ENCODE measurements at regions of chr10 and their contacts with region 1.

Region 1: DNA sequence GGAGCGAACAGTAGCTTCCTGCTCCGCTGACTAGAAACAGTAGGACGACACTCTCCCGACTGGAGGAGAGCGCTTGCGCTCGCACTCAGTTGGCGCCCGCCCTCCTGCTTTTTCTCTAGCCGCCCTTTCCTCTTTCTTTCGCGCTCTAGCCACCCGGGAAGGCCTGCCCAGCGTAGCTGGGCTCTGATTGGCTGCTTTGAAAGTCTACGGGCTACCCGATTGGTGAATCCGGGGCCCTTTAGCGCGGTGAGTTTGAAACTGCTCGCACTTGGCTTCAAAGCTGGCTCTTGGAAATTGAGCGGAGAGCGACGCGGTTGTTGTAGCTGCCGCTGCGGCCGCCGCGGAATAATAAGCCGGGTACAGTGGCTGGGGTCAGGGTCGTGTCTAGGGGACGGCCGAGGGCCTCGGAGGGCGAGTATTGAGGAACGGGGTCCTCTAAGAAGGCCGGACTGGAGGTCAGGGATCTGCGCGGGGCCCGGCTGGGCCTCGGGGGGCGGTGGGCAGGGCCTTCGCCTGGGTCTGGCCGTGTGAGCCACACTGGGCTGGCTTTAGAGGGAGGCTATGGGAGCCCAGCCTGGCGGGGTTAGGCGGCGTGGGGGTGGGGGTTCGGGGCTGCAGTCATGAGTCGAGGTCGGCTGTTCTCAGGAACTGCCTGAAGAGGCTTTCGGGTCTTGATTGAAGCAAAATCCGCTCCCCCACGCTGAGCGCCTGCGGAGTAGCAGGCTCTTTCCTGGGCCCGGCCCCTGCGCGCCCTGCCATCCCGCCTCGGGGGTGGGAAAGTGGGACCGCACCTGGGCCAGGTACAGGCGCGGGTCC is at the start of gene CDK1:
- ATAC-seq: peak; percentile 98 to 100 (median 99)
- H3K4me3 ChIP-seq: peak within 1 kb of the TSS; percentile 43 to 81 (median 54)
- H3K27ac ChIP-seq: peak within 1 kb of the TSS in 1 of 2 donors; percentile 55
- H3K4me1 ChIP-seq: peaks cover 3 to 9% of the 10 kb centered on the region in 2 donors
- total RNA-seq, gene CDK1: 0.31 to 77.5 (median 4.2) TPM

Region 2: DNA sequence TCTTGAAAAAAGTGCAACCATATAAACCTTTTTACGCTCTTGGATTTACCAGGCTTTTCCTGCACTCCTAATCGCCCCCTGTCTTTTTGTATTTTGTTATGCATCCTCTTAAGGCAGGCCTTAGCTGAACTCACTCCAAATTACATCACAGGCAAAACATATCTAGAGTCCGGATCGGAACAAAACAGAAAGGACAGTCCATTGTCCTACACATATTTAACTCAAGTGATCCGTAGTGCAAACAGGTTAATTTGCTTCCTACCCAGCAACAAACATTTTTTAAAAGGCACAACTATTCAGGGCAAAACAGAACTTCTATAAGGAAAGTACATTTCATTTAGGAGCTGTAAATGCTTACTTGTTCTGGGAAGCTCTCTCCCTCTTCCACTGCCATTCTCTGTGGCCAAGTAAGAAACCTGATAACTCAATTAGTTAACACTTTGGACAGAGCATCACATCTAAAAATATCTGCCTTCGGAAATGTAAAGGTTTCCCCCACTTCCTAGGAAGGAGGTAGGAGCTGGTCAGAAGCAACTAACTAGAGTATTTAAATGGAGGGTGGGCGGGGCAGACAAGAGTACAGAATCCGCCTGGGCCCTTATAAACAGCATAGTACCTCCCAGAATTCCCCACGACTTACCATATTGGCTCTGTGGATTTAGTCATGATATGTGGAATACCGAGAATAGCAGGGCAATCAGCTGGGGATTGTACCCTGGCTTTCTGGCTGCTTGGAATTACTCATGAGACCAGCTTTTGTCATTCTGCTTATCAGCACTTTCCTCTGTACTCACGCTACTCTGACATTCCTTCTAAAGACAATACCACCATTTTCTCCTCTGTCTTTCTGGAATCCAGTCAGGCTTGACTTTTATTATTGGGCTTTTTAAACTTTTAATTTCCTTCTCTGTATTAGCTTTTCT is 478.2 kb before region 1 on chr10:
- in situ Hi-C with region 1: no loop called
- ATAC-seq: peak in 6 of 8 experiments; percentile 71 to 97 (median 94)
- H3K4me3 ChIP-seq: peak overlapping the region in 3 of 5 donors; percentile 5 to 26 (median 25)
- H3K27ac ChIP-seq: peak overlapping the region in 1 of 2 donors; percentile 26
- H3K4me1 ChIP-seq: peaks cover 6 to 26% of the 10 kb centered on the region in 2 donors

Region 3: DNA sequence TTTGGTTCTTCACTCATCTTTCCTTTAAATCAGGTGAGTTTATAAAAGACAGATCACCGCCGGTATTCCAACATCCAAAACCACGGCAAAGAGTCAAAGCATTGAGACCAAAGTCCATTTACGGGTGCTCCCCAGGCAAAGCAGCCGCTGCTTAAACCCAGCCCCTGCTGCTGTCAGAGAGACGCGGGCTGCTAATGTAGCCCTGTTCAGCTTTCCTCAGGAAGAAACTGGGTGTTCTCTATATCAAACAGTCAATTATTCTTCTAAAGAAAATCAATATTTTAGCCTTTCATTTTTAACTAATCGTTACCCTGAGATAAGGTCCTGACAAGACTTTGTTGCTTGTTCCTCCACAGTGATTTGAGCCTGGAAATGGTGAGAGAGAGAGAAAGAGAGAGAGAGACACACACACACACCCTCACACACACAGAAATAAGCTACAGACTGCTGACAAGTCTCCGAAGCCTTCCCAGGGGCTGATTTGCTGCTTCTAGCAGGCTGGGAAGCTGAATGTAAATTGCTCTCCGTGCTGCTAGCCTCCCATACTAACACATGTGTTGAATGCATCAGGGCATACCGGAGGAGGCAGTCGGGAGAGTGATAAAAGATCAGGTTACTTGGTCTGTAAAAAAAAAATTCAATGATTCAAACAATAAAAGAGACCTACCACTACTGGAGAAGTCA is 205.8 kb before region 1 on chr10:
- in situ Hi-C with region 1: no loop called
- ATAC-seq: peak; percentile 88 to 99 (median 92)
- H3K4me3 ChIP-seq: peak overlapping the region; percentile 54 to 75 (median 56)
- H3K27ac ChIP-seq: peak overlapping the region; percentile 49 to 76
- H3K4me1 ChIP-seq: peaks cover 9 to 16% of the 10 kb centered on the region in 2 donors

Region 4: DNA sequence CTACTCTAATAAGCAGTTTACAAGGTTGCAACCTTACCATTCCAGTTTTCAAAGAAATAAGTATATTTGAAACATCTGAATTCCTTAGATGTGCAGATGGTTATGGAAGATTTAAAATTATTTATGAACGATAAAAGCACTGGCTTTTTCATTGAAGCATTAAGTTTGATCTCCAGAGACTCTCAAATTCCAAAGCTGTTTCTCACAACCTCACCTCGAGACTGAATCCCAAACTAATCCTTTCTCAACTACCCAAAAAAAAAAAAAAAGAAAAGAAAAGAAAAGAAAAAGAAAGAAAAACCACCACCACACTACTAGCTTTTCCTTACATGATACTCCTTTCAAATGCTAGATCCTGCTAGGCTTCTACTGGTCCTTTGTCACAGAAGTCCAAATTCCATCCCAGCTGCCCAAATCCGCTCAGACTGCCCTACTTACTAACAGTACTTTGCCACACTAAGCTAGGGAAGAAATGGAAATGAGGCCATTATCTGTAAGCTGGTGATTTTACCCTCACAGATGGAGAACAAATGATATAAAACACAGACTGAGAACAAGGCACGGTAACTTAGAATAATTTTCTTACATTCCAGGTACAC is 100.8 kb before region 1 on chr10:
- in situ Hi-C with region 1: loop called in 2 of 9 experiments (anchors 10 to 25 kb)
- ATAC-seq: no peak
- H3K4me3 ChIP-seq: no peak overlapping the region
- H3K27ac ChIP-seq: no peak overlapping the region
- H3K4me1 ChIP-seq: no peaks in the 10 kb centered on the region